ENCODE measurements at regions of chr15 and their contacts with region 1.

Region 1: DNA sequence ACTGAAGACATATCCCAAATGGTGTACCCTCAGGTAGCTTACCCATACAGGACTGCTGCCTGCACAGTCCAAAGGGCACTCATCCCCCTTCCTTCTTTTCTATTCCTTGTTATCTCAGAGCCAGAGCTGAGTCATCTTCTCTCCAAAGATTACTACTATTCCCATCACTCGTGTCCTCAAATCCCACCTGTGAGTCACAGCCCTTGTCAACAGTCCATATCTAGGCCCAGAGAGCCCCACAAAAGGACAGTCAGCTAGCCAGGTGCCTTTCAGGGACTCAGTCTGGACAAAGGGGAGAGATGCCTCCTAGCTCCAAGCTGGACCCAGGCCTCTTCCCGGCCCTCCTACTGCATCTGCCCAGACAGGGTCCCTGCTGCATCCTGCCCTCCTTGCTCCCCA is 11.0 kb downstream of the PARP16 start:
- DNase-seq: peak; percentile 20
- ATAC-seq: peak; percentile 15; the same call in 1 of the 2 replicates
- H3K4me3 ChIP-seq: no peak overlapping the region
- H3K27ac ChIP-seq: no peak overlapping the region
- H3K4me1 ChIP-seq: peaks cover 7% of the 10 kb centered on the region; the same call in 1 of the 2 replicates
- H3K27me3 ChIP-seq: no peaks in the 10 kb centered on the region
- CTCF ChIP-seq: no peak

Region 2: DNA sequence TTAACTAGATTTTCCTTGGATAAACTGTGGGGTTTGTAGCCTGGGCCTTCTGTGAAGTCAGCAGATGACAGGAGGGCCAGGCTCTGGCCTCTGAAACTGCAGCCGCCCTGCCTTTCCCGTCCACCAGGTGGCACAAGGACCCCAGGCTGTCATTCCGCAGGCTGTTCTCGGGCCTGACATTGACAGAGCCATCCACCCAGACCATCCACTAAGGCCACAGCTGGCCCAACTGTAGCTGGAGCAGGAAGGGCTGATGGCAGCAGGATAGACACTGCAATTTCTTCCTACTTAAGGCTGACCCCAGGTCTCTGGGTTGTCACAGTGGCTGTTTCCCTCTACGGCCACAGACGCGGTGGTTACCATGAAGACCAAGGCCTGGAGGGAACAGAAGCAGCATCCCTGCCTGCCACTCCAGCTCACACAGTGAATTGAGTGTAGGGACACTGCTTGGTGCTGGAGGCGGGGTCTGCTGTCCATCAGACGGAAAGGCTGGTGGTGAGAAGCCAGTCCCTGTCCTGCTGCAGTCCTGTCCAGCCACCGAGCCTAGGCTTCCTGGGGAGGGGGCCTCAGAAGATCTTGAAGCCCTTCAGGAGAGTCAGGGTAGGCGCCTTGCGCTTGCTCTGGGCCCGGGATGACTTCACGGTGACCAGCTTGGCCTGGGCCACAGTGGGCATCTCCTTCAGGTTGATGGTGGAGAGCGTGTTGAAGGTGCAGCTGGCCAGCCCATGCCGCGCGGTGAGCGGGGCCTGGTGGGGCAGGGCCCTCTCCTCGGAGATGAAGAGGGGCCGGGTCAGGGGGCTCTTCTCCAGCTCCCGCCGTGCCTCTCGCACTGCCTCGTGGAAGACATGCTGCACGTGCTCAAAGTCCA is 221.2 kb before region 1 on chr15:
- CTCF ChIA-PET with region 1: no interaction called
- POLR2A ChIA-PET with region 1: no interaction called
- intact Hi-C with region 1: loop called (anchors 10 kb)
- DNase-seq: peak; percentile 65
- ATAC-seq: peak; percentile 80
- H3K4me3 ChIP-seq: no peak overlapping the region
- H3K27ac ChIP-seq: no peak overlapping the region
- H3K4me1 ChIP-seq: peaks cover 22% of the 10 kb centered on the region
- H3K27me3 ChIP-seq: no peaks in the 10 kb centered on the region
- CTCF ChIP-seq: peak; percentile 79

Region 3: GRCh38 chr15:65184868-65185738 is 90.6 kb before region 1 on chr15 and contains the start of gene CLPX:
- CTCF ChIA-PET with region 1: no interaction called
- POLR2A ChIA-PET with region 1: no interaction called
- intact Hi-C with region 1: loop called (anchors 1 kb)
- DNase-seq: peak; percentile 80
- ATAC-seq: peak; percentile 79
- H3K4me3 ChIP-seq: peak within 1 kb of the TSS; percentile 85
- H3K27ac ChIP-seq: peak within 1 kb of the TSS; percentile 41
- H3K4me1 ChIP-seq: peaks cover 10% of the 10 kb centered on the region
- H3K27me3 ChIP-seq: no peaks in the 10 kb centered on the region
- CTCF ChIP-seq: no peak
- total RNA-seq, gene CLPX: 19.3 and 22.5 TPM in 2 replicates

Region 4: GRCh38 chr15:65249641-65250040 is 26.1 kb before region 1 on chr15:
- CTCF ChIA-PET with region 1: no interaction called
- POLR2A ChIA-PET with region 1: no interaction called
- intact Hi-C with region 1: no loop called
- DNase-seq: no peak
- ATAC-seq: no peak
- H3K4me3 ChIP-seq: no peak overlapping the region
- H3K27ac ChIP-seq: no peak overlapping the region
- H3K4me1 ChIP-seq: no peaks in the 10 kb centered on the region
- H3K27me3 ChIP-seq: no peaks in the 10 kb centered on the region
- CTCF ChIP-seq: no peak

Region 5: GRCh38 chr15:65318870-65319356 is 43.2 kb after region 1 on chr15:
- CTCF ChIA-PET with region 1: no interaction called
- POLR2A ChIA-PET with region 1: no interaction called
- intact Hi-C with region 1: no loop called
- DNase-seq: peak; percentile 84
- ATAC-seq: peak; percentile 99
- H3K4me3 ChIP-seq: no peak overlapping the region
- H3K27ac ChIP-seq: no peak overlapping the region
- H3K4me1 ChIP-seq: no peaks in the 10 kb centered on the region
- H3K27me3 ChIP-seq: no peaks in the 10 kb centered on the region
- CTCF ChIP-seq: peak; percentile 84

Region 6: GRCh38 chr15:65400760-65401610 is 125.3 kb after region 1 on chr15:
- CTCF ChIA-PET with region 1: no interaction called
- POLR2A ChIA-PET with region 1: no interaction called
- intact Hi-C with region 1: no loop called
- DNase-seq: peak; percentile 67
- ATAC-seq: peak; percentile 95
- H3K4me3 ChIP-seq: no peak overlapping the region
- H3K27ac ChIP-seq: no peak overlapping the region
- H3K4me1 ChIP-seq: no peaks in the 10 kb centered on the region
- H3K27me3 ChIP-seq: no peaks in the 10 kb centered on the region
- CTCF ChIP-seq: peak; percentile 66

Measured in PC-3 (cell line).